A549 (cell line): ENCODE measurements at regions of chr17 and their contacts with region 1.

Region 1: DNA sequence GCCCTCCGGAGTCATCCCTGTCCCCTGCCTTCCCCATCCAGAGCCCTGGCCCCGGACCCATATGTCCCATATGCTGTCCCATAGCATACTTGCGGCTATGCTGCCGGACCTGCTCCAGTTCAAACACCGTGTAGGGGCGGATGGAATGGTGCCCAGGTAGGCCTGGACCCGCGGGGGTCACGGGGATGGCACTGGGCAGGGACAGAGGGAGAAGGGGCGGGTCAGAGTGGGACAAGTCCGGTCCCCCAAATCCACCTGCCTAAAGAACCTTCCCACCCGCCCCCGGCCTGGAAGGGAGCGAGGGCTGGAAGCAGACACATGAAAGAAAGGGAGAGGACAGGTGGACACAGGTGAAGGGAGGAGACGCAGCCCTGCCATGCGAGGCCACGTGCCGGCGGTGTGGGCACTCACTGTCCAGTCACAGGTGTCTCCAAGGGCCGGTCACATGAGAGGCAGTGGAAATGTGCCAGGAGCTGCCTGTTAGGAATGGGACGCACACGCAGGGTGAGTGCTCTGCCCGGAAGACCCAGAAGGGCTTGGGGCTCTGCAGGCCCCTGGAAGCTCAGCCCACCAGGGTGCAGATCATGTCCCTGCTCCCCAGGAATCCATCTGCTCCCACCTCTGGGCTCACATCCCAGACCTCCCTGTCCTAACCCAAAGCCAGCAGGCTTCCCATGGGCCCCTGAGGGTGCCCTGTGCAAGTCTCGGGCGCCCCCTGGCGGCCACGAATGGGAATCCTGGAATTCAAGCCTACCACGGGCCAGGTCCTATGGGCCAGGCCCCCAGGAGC is 14.0 kb downstream of the UBALD2 start:
- DNase-seq: peak; percentile 78 to 96
- ATAC-seq: peak; percentile 75 to 97
- H3K4me3 ChIP-seq: no peak overlapping the region
- H3K27ac ChIP-seq: peak overlapping the region; percentile 3; a peak in 2 of 6 replicates
- H3K4me1 ChIP-seq: peaks cover 10% of the 10 kb centered on the region
- CTCF ChIP-seq: peak; percentile 100
- EP300 ChIP-seq: no peak
- POLR2A ChIP-seq: no peak
- RAD21 ChIP-seq: peak; percentile 99

Region 2: DNA sequence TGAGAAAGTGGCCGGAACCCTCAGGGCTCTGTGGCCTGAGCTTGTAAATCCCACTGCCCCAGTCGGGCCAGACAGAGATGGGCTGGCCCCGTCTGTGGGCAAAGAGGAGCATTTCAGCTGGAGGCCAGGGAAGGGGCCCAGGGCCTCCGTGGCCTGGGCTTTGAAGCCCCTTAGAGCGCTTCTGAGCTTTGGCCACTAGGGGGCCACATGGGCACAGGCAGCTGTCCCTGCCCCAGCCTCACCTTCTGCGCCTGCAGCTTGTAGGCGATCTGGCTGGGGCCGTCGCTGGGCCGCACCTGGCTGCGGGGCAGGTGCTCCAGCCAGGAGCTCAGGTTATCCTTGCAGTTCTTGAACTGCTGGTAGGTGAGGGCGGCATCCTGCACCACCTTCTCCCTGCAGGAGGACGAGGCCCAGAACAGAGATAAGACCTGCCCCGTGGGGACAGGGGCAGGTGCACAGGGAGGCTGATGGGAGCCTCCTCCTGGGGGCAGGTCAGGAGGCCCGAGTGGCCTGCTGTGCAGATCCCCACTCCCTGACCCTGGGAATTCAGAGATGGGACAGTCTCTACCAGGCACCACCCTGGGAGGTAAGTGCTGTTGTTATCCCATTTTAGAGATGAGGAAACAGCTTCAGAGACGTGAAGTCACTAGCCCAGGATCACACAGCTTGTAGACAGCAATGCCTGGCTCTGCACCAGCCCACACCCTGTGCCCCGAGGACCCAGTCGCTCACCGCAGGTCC is 264.8 kb before region 1 on chr17:
- CTCF ChIA-PET with region 1: interaction called, 117 read pairs
- POLR2A ChIA-PET with region 1: no interaction called
- DNase-seq: peak; percentile 76 to 87
- ATAC-seq: peak; percentile 86 to 96
- H3K4me3 ChIP-seq: no peak overlapping the region
- H3K27ac ChIP-seq: peak overlapping the region in 1 of 2 experiments; percentile 26; a peak in 1 of 6 replicates
- H3K4me1 ChIP-seq: no peaks in the 10 kb centered on the region
- CTCF ChIP-seq: peak; percentile 97
- EP300 ChIP-seq: no peak
- POLR2A ChIP-seq: no peak
- RAD21 ChIP-seq: peak; percentile 88 to 90

Region 3: DNA sequence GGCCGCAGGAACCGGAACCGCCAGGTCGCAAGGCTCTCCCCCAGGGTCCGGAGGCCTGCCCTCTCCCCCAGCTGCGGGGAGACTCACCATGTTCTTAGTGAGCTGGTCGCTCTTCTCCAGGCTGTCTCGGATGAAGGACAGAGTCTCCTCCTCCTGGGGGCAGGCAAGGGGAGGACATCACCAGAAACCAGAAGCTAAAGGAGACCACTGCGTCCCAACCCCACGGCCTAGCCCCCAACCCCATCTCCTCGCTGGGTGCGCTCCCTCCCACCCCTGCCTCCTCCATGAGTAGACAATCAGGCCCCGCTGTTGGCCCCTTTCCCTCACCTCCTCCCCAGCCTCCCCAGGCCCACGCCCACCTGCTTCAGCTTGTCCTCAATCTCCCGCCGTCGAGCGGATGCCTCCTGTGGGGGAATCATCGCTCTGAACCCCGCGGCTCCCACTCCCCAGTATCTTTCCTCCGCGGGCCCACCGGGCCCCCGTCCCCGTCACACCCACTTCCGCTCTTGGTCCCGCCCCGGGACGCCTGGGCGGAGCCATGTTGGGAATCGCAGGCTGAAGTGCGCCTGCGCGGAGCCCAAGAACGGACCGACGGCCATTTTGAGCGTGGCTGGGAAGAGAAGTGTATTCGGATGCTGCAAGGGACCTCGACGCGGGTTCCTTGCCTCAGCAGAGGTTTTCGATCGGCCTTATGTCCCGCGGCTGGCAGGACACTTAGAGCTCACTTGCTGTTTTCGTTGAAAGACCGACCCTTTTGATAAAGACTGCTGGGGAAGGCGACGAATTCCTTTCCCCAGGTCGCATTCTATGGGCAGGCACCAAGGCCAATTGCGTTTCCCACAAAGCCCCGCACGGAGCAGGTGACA is 175.6 kb before region 1 on chr17 and contains the start of gene EXOC7:
- CTCF ChIA-PET with region 1: interaction called, 755 read pairs
- POLR2A ChIA-PET with region 1: no interaction called
- DNase-seq: peak; percentile 95
- ATAC-seq: peak; percentile 93 to 96
- H3K4me3 ChIP-seq: peak within 1 kb of the TSS; percentile 69
- H3K27ac ChIP-seq: peak within 1 kb of the TSS; percentile 84 to 87
- H3K4me1 ChIP-seq: peaks cover 11% of the 10 kb centered on the region
- CTCF ChIP-seq: no peak
- EP300 ChIP-seq: no peak
- POLR2A ChIP-seq: peak; percentile 85
- RAD21 ChIP-seq: no peak
- polyA plus RNA-seq, gene EXOC7: 64.5 and 76.4 TPM in 2 replicates

Region 4: DNA sequence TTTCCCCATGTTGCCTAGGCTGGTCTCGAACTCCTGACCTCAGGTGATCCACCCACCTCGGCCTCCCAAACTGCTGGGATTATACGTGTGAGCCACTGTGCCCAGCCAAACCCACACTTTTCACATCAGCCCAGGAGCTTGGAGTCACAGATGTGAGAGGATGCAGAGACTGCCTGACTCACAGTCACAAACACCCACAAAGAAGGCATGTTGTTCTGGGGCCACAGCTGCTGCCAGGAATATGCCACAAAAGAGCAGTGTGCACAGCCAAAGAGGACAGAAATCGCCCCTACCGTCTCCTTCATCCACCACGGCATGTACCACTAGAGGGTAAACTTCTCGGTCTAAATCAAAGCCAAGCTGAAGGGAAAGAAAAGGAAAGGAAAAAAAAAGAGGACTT is 113.0 kb before region 1 on chr17:
- CTCF ChIA-PET with region 1: interaction called, 37 read pairs
- POLR2A ChIA-PET with region 1: no interaction called
- DNase-seq: no peak
- ATAC-seq: no peak
- H3K4me3 ChIP-seq: no peak overlapping the region
- H3K27ac ChIP-seq: no peak overlapping the region
- H3K4me1 ChIP-seq: no peaks in the 10 kb centered on the region
- CTCF ChIP-seq: no peak
- EP300 ChIP-seq: no peak
- POLR2A ChIP-seq: no peak
- RAD21 ChIP-seq: no peak

Region 5: GRCh38 chr17:76219670-76220383 is 59.3 kb before region 1 on chr17:
- CTCF ChIA-PET with region 1: interaction called, 26 read pairs
- POLR2A ChIA-PET with region 1: no interaction called
- DNase-seq: no peak
- ATAC-seq: no peak
- H3K4me3 ChIP-seq: no peak overlapping the region
- H3K27ac ChIP-seq: no peak overlapping the region
- H3K4me1 ChIP-seq: peaks cover 8% of the 10 kb centered on the region; the same call in 2 of the 3 replicates
- CTCF ChIP-seq: no peak
- EP300 ChIP-seq: no peak
- POLR2A ChIP-seq: no peak
- RAD21 ChIP-seq: no peak

Region 6: GRCh38 chr17:76264755-76265596 is 14.2 kb before region 1 on chr17 and contains the start of gene UBALD2:
- CTCF ChIA-PET with region 1: interaction called, 151 read pairs
- POLR2A ChIA-PET with region 1: interaction called, 6 read pairs
- DNase-seq: peak; percentile 100
- ATAC-seq: peak; percentile 92 to 98
- H3K4me3 ChIP-seq: peak within 1 kb of the TSS; percentile 99
- H3K27ac ChIP-seq: peak within 1 kb of the TSS; percentile 89 to 92
- H3K4me1 ChIP-seq: peaks cover 25% of the 10 kb centered on the region
- CTCF ChIP-seq: no peak
- EP300 ChIP-seq: no peak
- POLR2A ChIP-seq: peak; percentile 21; the same call in 1 of the 2 replicates
- RAD21 ChIP-seq: no peak
- polyA plus RNA-seq, gene UBALD2: 13.8 and 21.5 TPM in 2 replicates

Region 7: DNA sequence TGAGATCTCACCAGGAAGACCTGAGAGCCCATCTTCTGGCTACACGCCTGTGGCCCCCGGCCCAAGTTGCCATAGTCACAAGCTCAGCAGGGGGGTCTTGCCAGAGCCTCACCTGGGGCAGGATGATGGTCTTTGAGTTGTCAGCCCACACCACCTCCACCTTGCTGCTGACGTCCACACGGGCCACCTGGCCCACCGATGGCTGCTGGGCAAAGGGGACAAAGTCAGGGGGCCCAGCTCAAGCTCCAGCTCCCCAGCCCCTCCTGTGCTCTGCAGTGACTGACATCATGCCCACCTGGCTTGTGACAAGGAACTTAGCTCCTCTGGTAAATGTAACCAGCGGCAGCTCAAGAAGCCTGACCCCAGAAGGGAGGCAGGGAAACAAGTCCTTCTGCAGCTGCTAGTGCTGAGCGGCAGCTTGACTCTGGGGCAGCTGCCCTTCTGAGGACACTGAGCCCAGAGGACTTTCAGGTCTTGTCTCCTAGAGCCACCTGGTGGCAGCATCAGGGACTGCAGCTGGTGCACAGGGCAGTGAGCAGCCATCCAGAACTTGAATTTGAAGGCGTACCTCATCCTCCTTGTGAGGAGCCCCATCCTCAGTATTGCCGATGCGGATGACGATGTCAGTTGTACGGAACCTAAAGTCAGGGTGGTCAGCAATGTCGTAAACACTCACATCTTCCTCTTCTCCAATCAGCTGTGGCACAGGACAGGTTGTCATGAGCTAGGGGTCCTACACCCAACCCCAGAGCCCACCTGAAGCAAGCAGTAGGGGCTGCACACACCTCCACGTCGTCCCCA is 118.7 kb after region 1 on chr17:
- CTCF ChIA-PET with region 1: interaction called, 17 read pairs
- POLR2A ChIA-PET with region 1: no interaction called
- DNase-seq: peak; percentile 88 to 90
- ATAC-seq: peak; percentile 78 to 93
- H3K4me3 ChIP-seq: no peak overlapping the region
- H3K27ac ChIP-seq: no peak overlapping the region
- H3K4me1 ChIP-seq: no peaks in the 10 kb centered on the region
- CTCF ChIP-seq: peak; percentile 95
- EP300 ChIP-seq: no peak
- POLR2A ChIP-seq: no peak
- RAD21 ChIP-seq: peak; percentile 78 to 86

Region 8: GRCh38 chr17:76458580-76459490 is 179.7 kb after region 1 on chr17:
- CTCF ChIA-PET with region 1: no interaction called
- POLR2A ChIA-PET with region 1: no interaction called
- DNase-seq: peak; percentile 78 to 91
- ATAC-seq: peak; percentile 91 to 95
- H3K4me3 ChIP-seq: no peak overlapping the region
- H3K27ac ChIP-seq: no peak overlapping the region; a peak in 1 of 6 replicates
- H3K4me1 ChIP-seq: no peaks in the 10 kb centered on the region
- CTCF ChIP-seq: peak; percentile 76
- EP300 ChIP-seq: no peak
- POLR2A ChIP-seq: no peak
- RAD21 ChIP-seq: peak; percentile 82 to 89